HEK293 (cell line): ENCODE measurements at regions of chr16 and their contacts with region 1.

Region 1: GRCh38 chr16:49921791-49922456 is 66.0 kb upstream of the ZNF423 start:
- H3K4me3 ChIP-seq: no peak overlapping the region
- H3K27ac ChIP-seq: no peak overlapping the region
- H3K4me1 ChIP-seq: no peaks in the 10 kb centered on the region
- CTCF ChIP-seq: peak; percentile 83

Region 2: DNA sequence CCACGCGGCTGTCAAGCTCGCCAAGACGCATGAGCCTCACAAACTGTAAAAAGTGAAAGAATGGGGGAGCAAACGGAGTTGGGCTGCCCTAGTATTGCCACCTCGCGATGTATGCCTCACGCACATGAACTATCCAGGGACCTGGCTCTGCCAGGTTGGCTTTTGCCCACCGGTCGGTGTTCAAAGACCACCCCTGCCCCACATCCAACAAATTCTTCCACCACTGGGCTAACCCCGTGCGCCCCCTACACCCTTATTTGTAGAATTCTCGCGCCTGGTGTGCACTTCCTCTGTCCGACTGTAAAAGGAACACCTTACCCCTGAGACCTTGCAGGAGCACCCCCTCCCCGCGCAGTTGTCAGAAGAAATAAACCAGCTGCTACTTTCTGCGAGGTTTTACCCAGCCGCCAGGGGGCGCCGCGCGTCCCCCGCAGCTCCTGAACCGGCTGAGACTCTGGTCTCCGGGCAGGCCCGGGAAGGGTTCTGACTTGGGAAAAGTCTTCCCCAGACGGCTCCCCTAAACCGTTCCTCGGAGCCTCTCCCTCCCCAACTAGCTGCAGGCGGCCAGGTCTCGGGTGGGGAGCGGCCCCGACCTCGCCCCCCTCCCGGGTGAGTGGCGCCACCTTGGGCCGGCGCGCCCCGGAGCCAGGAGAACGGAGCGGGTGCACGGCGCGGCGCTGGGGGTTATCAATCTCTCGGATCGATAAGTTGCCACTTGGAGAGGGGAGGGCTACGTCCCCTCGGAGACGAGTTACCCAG is 64.3 kb before region 1 on chr16:
- CTCF ChIA-PET with region 1: interaction called, 14 read pairs
- POLR2A ChIA-PET with region 1: no interaction called
- H3K4me3 ChIP-seq: peak overlapping the region; percentile 9
- H3K27ac ChIP-seq: no peak overlapping the region; the same call in 1 of the 2 replicates
- H3K4me1 ChIP-seq: peaks cover 2% of the 10 kb centered on the region
- CTCF ChIP-seq: peak; percentile 92